Calu3 (cell line): ENCODE measurements at regions of chr21 and their contacts with region 1.

Region 1: DNA sequence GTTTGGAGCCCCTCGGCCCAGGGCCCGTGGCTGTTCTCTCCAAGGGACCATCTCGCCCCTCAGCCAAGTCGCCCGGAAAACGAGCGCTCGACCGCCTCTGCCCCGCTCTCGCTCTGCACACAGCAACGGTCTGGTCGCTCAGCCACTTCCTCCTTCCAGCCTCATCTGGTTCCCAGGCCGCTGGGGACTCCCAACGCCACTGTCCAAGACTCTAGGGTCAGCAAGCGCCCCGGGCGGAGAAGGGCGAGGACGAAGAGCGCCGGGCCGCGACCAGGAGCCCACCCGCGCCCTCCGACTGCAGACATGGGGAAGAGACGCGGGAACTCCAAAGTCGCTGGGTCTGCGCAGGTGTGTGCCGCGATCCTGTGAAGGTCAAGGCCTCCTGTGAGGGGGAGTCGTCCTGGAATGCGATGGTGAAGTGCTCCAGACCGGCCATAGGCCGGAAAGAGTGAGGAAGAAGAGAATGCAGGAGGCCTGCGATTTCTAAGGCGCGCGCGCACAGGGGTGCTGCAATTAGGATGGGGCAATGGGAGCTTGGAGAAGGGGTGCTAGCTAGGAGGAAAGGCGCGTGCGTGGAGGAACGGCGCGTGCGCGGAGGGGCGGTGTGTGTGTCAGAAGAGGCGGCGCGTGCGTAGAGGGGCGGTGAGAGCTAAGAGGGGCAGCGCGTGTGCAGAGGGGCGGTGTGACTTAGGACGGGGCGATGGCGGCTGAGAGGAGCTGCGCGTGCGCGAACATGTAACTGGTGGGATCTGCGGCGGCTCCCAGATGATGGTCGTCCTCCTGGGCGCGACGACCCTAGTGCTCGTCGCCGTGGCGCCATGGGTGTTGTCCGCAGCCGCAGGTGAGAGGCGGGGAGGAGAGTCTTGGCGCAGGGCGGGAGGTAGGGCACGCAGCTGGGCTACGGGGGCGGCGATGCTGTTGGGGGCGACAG is at the start of gene IFNAR1:
- DNase-seq: peak; percentile 95
- H3K4me3 Mint-ChIP-seq: no peak within 1 kb of the TSS
- H3K27ac Mint-ChIP-seq: no peak within 1 kb of the TSS
- H3K4me1 Mint-ChIP-seq: no peaks in the 10 kb centered on the region
- H3K27me3 Mint-ChIP-seq: no peaks in the 10 kb centered on the region
- CTCF ChIP-seq: no peak
- total RNA-seq, gene IFNAR1: 32.1 and 35.2 TPM in 2 replicates

Region 2: GRCh38 chr21:33266050-33266788 is 58.3 kb before region 1 on chr21 and contains the start of gene IL10RB:
- CTCF ChIA-PET with region 1: no interaction called
- intact Hi-C with region 1: loop called (anchors 10 kb)
- DNase-seq: peak; percentile 67
- H3K4me3 Mint-ChIP-seq: peak within 1 kb of the TSS; percentile 96
- H3K27ac Mint-ChIP-seq: peak within 1 kb of the TSS; percentile 96
- H3K4me1 Mint-ChIP-seq: peaks cover 46% of the 10 kb centered on the region
- H3K27me3 Mint-ChIP-seq: no peaks in the 10 kb centered on the region
- CTCF ChIP-seq: no peak
- total RNA-seq, gene IL10RB: 16.0 and 18.2 TPM in 2 replicates

Region 3: GRCh38 chr21:33299181-33299752 is 25.3 kb before region 1 on chr21:
- CTCF ChIA-PET with region 1: interaction called, 14 read pairs
- intact Hi-C with region 1: no loop called
- DNase-seq: peak; percentile 21
- H3K4me3 Mint-ChIP-seq: no peak overlapping the region
- H3K27ac Mint-ChIP-seq: no peak overlapping the region
- H3K4me1 Mint-ChIP-seq: peaks cover 19% of the 10 kb centered on the region
- H3K27me3 Mint-ChIP-seq: no peaks in the 10 kb centered on the region
- CTCF ChIP-seq: no peak

Region 4: GRCh38 chr21:33588485-33589335 is 264.2 kb after region 1 on chr21 and contains the start of gene DONSON:
- CTCF ChIA-PET with region 1: no interaction called
- intact Hi-C with region 1: no loop called
- DNase-seq: peak; percentile 91
- H3K4me3 Mint-ChIP-seq: peak within 1 kb of the TSS; percentile 85
- H3K27ac Mint-ChIP-seq: peak within 1 kb of the TSS; percentile 72
- H3K4me1 Mint-ChIP-seq: no peaks in the 10 kb centered on the region
- H3K27me3 Mint-ChIP-seq: no peaks in the 10 kb centered on the region
- CTCF ChIP-seq: no peak
- total RNA-seq, gene DONSON: 13.8 and 18.2 TPM in 2 replicates

Region 5: GRCh38 chr21:33655591-33656221 is 331.1 kb after region 1 on chr21:
- CTCF ChIA-PET with region 1: no interaction called
- intact Hi-C with region 1: no loop called
- DNase-seq: peak; percentile 66
- H3K4me3 Mint-ChIP-seq: peak overlapping the region; percentile 64
- H3K27ac Mint-ChIP-seq: peak overlapping the region; percentile 98
- H3K4me1 Mint-ChIP-seq: peaks cover 54% of the 10 kb centered on the region
- H3K27me3 Mint-ChIP-seq: no peaks in the 10 kb centered on the region
- CTCF ChIP-seq: no peak